ENCODE measurements at regions of chr11 and their contacts with region 1.

Region 1: GRCh38 chr11:118295834-118296454 is 8.6 kb upstream of the CD3E start:
- DNase-seq: no peak
- H3K4me3 ChIP-seq: no peak overlapping the region
- CTCF ChIP-seq: no peak
- POLR2A ChIP-seq: no peak

Region 2: DNA sequence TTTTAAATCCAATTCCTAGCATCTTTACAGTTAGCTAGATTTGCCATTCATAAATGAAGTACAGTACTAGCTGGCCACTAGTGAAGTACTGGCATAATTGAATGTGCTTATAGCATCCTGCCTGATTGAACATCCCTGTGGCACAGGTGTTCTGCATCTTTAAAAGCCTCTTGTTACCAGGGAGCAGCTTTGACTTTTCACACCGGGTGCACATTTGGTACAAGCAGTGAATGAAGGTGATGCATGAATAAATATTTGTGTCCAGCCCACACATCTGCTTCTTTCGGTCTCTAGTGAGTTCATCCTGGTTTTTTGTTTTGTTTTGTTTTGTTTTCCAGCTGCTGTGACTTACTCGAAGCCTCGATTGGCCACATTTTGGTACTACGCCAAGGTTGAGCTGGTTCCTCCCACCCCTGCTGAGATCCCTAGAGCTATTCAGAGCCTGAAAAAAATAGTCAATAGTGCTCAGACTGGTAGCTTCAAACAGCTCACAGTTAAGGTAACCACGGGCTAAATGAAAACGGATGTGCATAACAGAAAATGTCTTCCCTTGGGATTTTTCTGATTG is 110.7 kb after region 1 on chr11:
- intact Hi-C with region 1: no loop called
- DNase-seq: no peak
- H3K4me3 ChIP-seq: no peak overlapping the region
- CTCF ChIP-seq: no peak
- POLR2A ChIP-seq: no peak

Region 3: DNA sequence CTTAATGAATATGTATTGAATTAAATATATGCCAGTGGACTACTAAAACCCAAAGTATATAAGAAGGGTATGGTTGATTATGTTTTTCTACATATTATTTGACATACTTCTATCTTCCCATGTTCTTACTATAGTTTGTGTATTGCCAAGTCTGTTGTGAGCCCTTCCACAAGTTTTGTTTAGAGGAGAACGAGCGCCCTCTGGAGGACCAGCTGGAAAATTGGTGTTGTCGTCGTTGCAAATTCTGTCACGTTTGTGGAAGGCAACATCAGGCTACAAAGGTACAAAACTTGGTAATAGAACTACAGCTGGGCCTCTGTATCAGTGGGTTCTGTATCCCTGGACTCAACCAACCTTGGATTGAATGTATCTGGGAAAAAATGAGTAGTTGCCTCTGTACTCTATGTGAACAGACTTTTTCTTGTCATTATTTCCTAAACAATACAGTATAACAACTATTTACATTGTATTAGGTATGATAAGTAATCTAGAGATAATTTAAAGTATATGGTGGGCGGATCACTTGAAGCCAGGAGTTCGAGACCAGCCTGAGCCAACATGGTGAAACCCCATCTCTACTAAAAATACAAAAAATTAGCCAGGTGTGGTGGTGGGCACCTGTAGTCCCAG is 192.7 kb after region 1 on chr11:
- intact Hi-C with region 1: loop called (anchors 5 kb)
- DNase-seq: peak in 1 of 2 donors; percentile 39
- H3K4me3 ChIP-seq: no peak overlapping the region
- CTCF ChIP-seq: peak in 1 of 3 donors; percentile 55
- POLR2A ChIP-seq: no peak

Measured in lower leg skin (tissue), 4 donors.